ENCODE measurements at regions of chr14 and their contacts with region 1.

Region 1: GRCh38 chr14:54366736-54367735 is 29.8 kb upstream of the CDKN3 start:
- DNase-seq: peak in 2 of 5 donors; percentile 33 to 42
- ATAC-seq: peak; percentile 56 to 76 (median 60)
- H3K4me3 ChIP-seq: no peak overlapping the region
- H3K27ac ChIP-seq: peak overlapping the region in 2 of 12 donors; percentile 54 to 90
- H3K4me1 ChIP-seq: peaks cover 0 to 43% (median 14%) of the 10 kb centered on the region in 12 donors
- H3K27me3 ChIP-seq: no peaks in the 10 kb centered on the region
- CTCF ChIP-seq: peak in 10 of 12 donors; percentile 15 to 56 (median 39)
- POLR2A ChIP-seq: no peak

Region 2: DNA sequence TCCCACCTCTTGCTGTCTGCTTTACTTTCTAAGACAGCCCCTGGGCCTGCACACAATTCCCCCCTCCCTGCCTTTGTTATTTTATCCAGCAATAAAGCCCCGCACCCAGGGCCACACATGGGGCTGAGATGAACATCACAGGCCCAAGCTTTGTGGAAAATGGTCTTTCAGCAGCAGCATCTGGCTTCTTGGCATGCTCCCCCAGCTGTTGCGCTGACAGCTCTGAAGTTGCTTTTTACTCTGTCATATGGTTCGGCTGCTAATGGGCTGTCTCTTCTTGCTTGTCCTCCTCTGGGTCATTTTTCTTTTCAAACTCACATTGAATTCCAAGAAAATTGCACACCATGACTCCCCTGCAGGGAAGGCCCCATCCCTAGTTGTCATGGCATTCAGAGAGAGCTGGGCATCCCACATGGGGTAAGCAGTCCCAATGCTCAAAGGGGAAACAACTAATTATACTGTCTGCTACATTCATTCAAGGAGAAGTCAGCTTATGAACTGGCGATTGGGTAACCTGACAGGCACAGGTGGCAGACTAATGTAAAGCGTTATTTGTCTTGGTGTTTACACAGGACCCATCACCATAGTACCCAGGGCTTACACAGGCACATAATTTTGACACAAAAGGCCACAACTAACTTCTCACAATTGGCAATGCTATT is 44.2 kb before region 1 on chr14:
- intact Hi-C with region 1: no loop called
- DNase-seq: peak in 3 of 5 donors; percentile 43 to 75 (median 65)
- ATAC-seq: peak in 3 of 4 donors; percentile 46 to 69 (median 49)
- H3K4me3 ChIP-seq: no peak overlapping the region
- H3K27ac ChIP-seq: peak overlapping the region in 5 of 12 donors; percentile 19 to 46 (median 34)
- H3K4me1 ChIP-seq: peaks cover 0 to 5% (median 0%) of the 10 kb centered on the region in 12 donors
- H3K27me3 ChIP-seq: no peaks in the 10 kb centered on the region
- CTCF ChIP-seq: no peak
- POLR2A ChIP-seq: no peak

Region 3: GRCh38 chr14:54420013-54420809 is 53.2 kb after region 1 on chr14:
- intact Hi-C with region 1: loop called in 1 of 10 experiments (anchors 5 kb)
- DNase-seq: peak in 1 of 5 donors; percentile 25
- ATAC-seq: peak; percentile 47 to 67 (median 54)
- H3K4me3 ChIP-seq: no peak overlapping the region
- H3K27ac ChIP-seq: no peak overlapping the region
- H3K4me1 ChIP-seq: peaks cover 0 to 8% (median 0%) of the 10 kb centered on the region in 12 donors
- H3K27me3 ChIP-seq: no peaks in the 10 kb centered on the region
- CTCF ChIP-seq: peak; percentile 23 to 71 (median 59)
- POLR2A ChIP-seq: no peak